PC-3 (cell line): ENCODE measurements at regions of chr2 and their contacts with region 1.

Region 1: GRCh38 chr2:64523666-64524603 is at the start of gene AFTPH:
- DNase-seq: peak; percentile 99
- ATAC-seq: peak; percentile 91
- H3K4me3 ChIP-seq: peak within 1 kb of the TSS; percentile 76
- H3K27ac ChIP-seq: peak within 1 kb of the TSS; percentile 57
- H3K4me1 ChIP-seq: peaks cover 4% of the 10 kb centered on the region
- H3K27me3 ChIP-seq: no peaks in the 10 kb centered on the region
- CTCF ChIP-seq: no peak
- total RNA-seq, gene AFTPH: 18.9 and 26.6 TPM in 2 replicates

Region 2: GRCh38 chr2:64474121-64474571 is 49.8 kb before region 1 on chr2:
- CTCF ChIA-PET with region 1: no interaction called
- POLR2A ChIA-PET with region 1: no interaction called
- intact Hi-C with region 1: no loop called
- DNase-seq: no peak
- ATAC-seq: no peak
- H3K4me3 ChIP-seq: no peak overlapping the region
- H3K27ac ChIP-seq: no peak overlapping the region
- H3K4me1 ChIP-seq: peaks cover 6% of the 10 kb centered on the region; the same call in 1 of the 2 replicates
- H3K27me3 ChIP-seq: no peaks in the 10 kb centered on the region
- CTCF ChIP-seq: no peak

Region 3: GRCh38 chr2:64488050-64488974 is 35.6 kb before region 1 on chr2:
- CTCF ChIA-PET with region 1: interaction called, 18 read pairs
- POLR2A ChIA-PET with region 1: no interaction called
- intact Hi-C with region 1: no loop called
- DNase-seq: peak; percentile 83
- ATAC-seq: peak; percentile 64
- H3K4me3 ChIP-seq: no peak overlapping the region
- H3K27ac ChIP-seq: no peak overlapping the region
- H3K4me1 ChIP-seq: peaks cover 10% of the 10 kb centered on the region; the same call in 1 of the 2 replicates
- H3K27me3 ChIP-seq: no peaks in the 10 kb centered on the region
- CTCF ChIP-seq: peak; percentile 73

Region 4: DNA sequence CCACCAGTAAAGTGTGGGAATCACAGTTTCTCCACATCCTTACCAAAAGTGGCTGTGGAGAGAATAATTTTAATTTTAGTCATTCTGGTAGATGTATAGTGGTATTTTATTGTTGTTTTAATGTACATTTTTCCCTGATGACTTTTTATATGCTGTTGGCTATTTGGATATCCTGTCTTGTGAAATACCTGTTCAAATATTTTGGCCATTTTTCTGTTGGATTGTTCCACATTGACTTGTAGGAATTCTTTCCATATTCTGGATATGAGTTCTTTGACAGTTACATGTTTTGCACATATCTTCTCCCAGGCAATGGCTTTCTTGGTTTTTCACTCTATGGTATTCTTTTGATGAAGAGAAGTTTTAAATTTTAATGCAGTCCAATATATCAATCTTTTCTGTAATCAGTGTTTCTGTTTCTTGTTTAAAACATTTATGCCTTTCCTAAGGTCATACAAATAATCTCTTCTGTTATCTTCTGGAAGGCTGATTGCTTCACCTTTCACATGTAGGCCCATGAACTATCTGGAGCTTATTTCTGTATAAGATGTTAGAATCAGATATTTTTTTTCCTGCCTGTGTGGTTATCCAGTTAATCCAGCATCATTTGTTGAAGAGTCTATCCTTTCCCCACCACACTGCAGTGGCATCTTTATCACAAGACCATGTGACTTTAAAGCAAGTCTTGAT is 19.2 kb after region 1 on chr2:
- CTCF ChIA-PET with region 1: no interaction called
- POLR2A ChIA-PET with region 1: no interaction called
- intact Hi-C with region 1: loop called (anchors 1 kb)
- DNase-seq: peak; percentile 87
- ATAC-seq: peak; percentile 66
- H3K4me3 ChIP-seq: no peak overlapping the region; the same call in 1 of the 2 replicates
- H3K27ac ChIP-seq: peak overlapping the region; percentile 84
- H3K4me1 ChIP-seq: peaks cover 64% of the 10 kb centered on the region
- H3K27me3 ChIP-seq: no peaks in the 10 kb centered on the region
- CTCF ChIP-seq: no peak

Region 5: DNA sequence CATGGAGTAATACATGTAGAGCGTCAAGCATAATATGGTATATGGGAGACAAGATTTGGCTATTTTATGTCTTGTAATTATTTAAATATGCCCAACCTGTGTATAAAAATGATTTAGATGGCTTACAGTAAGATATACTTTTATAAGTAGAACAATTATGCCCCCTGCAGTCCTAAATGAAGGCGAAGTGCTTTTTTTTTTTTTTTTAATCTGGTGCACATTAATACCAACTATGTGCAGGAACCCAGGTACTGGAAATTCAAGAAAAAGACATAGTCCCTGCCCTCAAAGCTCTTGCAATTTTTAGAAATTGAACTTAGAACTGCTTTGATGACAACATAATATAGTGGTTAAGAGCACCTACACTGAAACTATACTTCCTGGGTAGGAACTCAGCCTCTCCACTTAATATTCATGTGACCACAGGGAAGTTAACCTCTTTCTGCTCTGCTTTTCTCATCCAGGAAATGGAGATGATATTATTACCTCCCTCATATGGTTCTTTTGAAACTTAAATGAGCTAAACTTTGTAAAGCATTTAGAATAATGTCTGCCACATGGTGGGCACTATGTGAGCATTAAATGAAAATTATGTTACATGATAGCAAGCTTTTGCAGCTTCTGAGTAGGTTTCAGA is 38.3 kb after region 1 on chr2:
- CTCF ChIA-PET with region 1: interaction called, 5 read pairs
- POLR2A ChIA-PET with region 1: no interaction called
- intact Hi-C with region 1: loop called (anchors 1 kb)
- DNase-seq: peak; percentile 71
- ATAC-seq: peak; percentile 66
- H3K4me3 ChIP-seq: no peak overlapping the region
- H3K27ac ChIP-seq: no peak overlapping the region
- H3K4me1 ChIP-seq: no peaks in the 10 kb centered on the region
- H3K27me3 ChIP-seq: no peaks in the 10 kb centered on the region
- CTCF ChIP-seq: peak; percentile 82

Region 6: GRCh38 chr2:64622443-64623241 is 98.7 kb after region 1 on chr2:
- CTCF ChIA-PET with region 1: no interaction called
- POLR2A ChIA-PET with region 1: no interaction called
- intact Hi-C with region 1: no loop called
- DNase-seq: no peak
- ATAC-seq: no peak
- H3K4me3 ChIP-seq: no peak overlapping the region
- H3K27ac ChIP-seq: no peak overlapping the region
- H3K4me1 ChIP-seq: no peaks in the 10 kb centered on the region
- H3K27me3 ChIP-seq: no peaks in the 10 kb centered on the region
- CTCF ChIP-seq: no peak

Region 7: GRCh38 chr2:64644177-64645004 is 120.5 kb after region 1 on chr2:
- CTCF ChIA-PET with region 1: interaction called, 6 read pairs
- POLR2A ChIA-PET with region 1: no interaction called
- intact Hi-C with region 1: loop called (anchors 5 kb)
- DNase-seq: peak; percentile 80
- ATAC-seq: peak; percentile 68
- H3K4me3 ChIP-seq: peak overlapping the region; percentile 67
- H3K27ac ChIP-seq: peak overlapping the region; percentile 92
- H3K4me1 ChIP-seq: peaks cover 87% of the 10 kb centered on the region
- H3K27me3 ChIP-seq: no peaks in the 10 kb centered on the region
- CTCF ChIP-seq: no peak

Region 8: DNA sequence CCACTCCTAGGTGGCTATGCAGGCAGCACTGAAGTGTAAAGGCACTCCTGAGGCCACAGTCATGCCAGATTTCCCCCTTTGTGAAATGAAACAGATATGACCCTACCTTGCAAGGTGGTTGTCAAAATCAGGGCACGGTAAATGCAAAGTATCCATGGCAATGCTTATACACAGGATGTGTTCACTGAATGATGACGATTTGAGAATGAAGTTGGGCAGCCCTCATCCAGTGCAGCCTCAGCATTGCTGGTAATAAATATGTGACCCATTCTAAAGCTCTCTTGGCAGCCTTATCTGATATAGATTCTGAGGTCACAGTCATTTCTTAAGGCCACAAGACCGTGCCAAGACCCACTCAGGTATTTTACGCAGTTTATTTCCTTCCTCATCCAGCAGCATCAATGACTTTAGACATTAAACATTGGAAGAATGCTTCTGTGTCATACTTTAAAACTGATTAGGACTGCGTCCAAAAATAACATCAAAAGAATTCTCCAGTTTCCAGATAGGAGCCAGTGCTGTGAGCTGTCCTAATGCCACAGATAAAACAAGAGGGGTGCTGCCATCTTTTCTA is 255.3 kb after region 1 on chr2:
- CTCF ChIA-PET with region 1: no interaction called
- POLR2A ChIA-PET with region 1: no interaction called
- intact Hi-C with region 1: no loop called
- DNase-seq: peak; percentile 94
- ATAC-seq: peak; percentile 75
- H3K4me3 ChIP-seq: no peak overlapping the region
- H3K27ac ChIP-seq: peak overlapping the region; percentile 63
- H3K4me1 ChIP-seq: peaks cover 44% of the 10 kb centered on the region
- H3K27me3 ChIP-seq: no peaks in the 10 kb centered on the region
- CTCF ChIP-seq: no peak

Region 9: GRCh38 chr2:64819774-64820696 is 296.1 kb after region 1 on chr2:
- CTCF ChIA-PET with region 1: no interaction called
- POLR2A ChIA-PET with region 1: no interaction called
- intact Hi-C with region 1: no loop called
- DNase-seq: peak; percentile 70
- ATAC-seq: peak; percentile 89
- H3K4me3 ChIP-seq: peak overlapping the region; percentile 19
- H3K27ac ChIP-seq: peak overlapping the region; percentile 80
- H3K4me1 ChIP-seq: peaks cover 38% of the 10 kb centered on the region
- H3K27me3 ChIP-seq: no peaks in the 10 kb centered on the region
- CTCF ChIP-seq: no peak

Region 10: GRCh38 chr2:64888591-64889309 is 364.8 kb after region 1 on chr2:
- CTCF ChIA-PET with region 1: interaction called, 3 read pairs
- POLR2A ChIA-PET with region 1: no interaction called
- intact Hi-C with region 1: loop called (anchors 1 kb)
- DNase-seq: peak; percentile 96
- ATAC-seq: peak; percentile 98
- H3K4me3 ChIP-seq: no peak overlapping the region
- H3K27ac ChIP-seq: no peak overlapping the region
- H3K4me1 ChIP-seq: peaks cover 11% of the 10 kb centered on the region
- H3K27me3 ChIP-seq: no peaks in the 10 kb centered on the region
- CTCF ChIP-seq: peak; percentile 89

Region 11: DNA sequence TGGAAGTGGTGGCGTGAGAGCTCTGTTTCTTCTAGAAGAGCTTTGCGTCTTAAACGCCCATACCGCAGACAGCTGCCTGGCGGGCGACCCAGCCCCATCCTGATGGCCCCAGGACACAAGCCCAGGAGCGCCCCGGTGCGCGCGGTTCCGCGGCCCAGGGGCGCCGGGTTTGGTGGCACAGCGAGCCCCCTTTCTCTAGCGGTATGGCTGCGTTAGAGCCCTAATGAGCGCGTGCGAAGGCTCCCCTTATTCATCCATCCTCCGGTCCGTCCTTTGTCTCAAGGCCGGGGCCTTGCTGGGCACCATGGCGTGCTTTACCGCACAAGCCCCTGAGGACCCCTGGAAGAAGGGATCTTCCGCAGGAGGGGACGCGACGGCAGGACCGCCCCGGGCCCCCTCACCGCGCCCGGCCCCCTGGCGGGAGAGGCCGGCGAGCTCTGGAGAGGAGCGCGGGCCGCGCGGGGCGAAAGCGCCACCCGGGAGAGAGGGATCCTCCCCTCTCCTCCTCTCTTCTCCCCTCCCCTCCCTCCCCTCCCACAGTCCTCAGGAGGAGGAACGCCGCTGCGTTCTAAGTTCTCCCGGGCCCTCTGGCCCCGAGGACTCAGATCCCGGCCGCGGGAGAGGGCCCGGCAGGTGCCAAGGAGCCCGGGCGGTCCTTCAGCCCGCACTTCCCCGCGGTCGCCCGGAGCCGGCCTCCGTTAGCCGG is 464.6 kb after region 1 on chr2:
- CTCF ChIA-PET with region 1: no interaction called
- POLR2A ChIA-PET with region 1: interaction called, 11 read pairs
- intact Hi-C with region 1: no loop called
- DNase-seq: no peak
- ATAC-seq: peak; percentile 71
- H3K4me3 ChIP-seq: peak overlapping the region; percentile 97
- H3K27ac ChIP-seq: peak overlapping the region; percentile 57
- H3K4me1 ChIP-seq: peaks cover 17% of the 10 kb centered on the region
- H3K27me3 ChIP-seq: no peaks in the 10 kb centered on the region
- CTCF ChIP-seq: peak; percentile 47